Mammary epithelial cell (primary cell): ENCODE measurements at regions of chr11 and their contacts with region 1.

Region 1: GRCh38 chr11:77411717-77412441 is 62.0 kb downstream of the PAK1 start:
- DNase-seq: peak; percentile 92
- H3K4me3 ChIP-seq: peak overlapping the region; percentile 65 to 87 (median 76)
- H3K27ac ChIP-seq: peak overlapping the region; percentile 58
- H3K4me1 ChIP-seq: peaks cover 32% of the 10 kb centered on the region
- H3K27me3 ChIP-seq: no peaks in the 10 kb centered on the region
- CTCF ChIP-seq: peak in 1 of 2 donors; percentile 36

Region 2: DNA sequence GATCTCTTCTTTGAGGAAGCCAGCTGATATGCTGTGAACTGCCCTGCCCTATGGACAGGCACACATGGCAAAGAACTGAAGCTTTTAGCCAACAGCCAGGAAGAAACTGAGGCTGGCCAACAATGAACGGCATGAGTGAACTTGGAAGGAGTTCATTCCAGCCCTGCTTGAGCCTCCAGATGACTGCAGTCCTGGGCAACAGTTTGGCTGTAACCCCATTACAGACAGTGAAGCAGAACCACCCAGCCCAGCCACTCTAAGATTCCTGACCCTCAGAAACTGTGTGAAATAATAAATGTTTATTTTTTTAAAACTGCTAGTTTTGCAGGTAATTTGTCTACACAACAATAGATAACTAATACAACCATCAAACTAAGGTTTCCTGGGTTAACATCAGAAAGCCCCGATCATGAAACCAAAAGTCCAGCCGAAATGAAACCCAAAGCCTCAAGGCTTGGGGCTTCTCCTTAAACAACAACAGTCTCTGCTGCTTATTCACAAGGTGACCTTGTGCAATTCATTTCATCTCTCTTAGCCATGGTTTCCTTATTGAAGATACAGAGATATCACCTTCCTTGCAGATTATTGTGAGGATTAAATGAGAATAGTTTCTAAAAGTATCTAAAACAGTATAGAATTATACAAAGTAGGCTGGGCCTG is 30.6 kb after region 1 on chr11:
- CTCF ChIA-PET with region 1: no interaction called
- dilution Hi-C with region 1: loop called (anchors 5 kb)
- in situ Hi-C with region 1: no loop called
- intact Hi-C with region 1: no loop called
- DNase-seq: no peak
- H3K4me3 ChIP-seq: no peak overlapping the region
- H3K27ac ChIP-seq: no peak overlapping the region
- H3K4me1 ChIP-seq: peaks cover 5% of the 10 kb centered on the region
- H3K27me3 ChIP-seq: no peaks in the 10 kb centered on the region
- CTCF ChIP-seq: no peak